ENCODE measurements at regions of chr16 and their contacts with region 1.

Region 1: GRCh38 chr16:72847187-72848027 is 200.5 kb downstream of the ZFHX3 start:
- DNase-seq: peak in 1 of 2 donors; percentile 80
- H3K4me3 ChIP-seq: no peak overlapping the region
- CTCF ChIP-seq: no peak
- POLR2A ChIP-seq: no peak

Region 2: DNA sequence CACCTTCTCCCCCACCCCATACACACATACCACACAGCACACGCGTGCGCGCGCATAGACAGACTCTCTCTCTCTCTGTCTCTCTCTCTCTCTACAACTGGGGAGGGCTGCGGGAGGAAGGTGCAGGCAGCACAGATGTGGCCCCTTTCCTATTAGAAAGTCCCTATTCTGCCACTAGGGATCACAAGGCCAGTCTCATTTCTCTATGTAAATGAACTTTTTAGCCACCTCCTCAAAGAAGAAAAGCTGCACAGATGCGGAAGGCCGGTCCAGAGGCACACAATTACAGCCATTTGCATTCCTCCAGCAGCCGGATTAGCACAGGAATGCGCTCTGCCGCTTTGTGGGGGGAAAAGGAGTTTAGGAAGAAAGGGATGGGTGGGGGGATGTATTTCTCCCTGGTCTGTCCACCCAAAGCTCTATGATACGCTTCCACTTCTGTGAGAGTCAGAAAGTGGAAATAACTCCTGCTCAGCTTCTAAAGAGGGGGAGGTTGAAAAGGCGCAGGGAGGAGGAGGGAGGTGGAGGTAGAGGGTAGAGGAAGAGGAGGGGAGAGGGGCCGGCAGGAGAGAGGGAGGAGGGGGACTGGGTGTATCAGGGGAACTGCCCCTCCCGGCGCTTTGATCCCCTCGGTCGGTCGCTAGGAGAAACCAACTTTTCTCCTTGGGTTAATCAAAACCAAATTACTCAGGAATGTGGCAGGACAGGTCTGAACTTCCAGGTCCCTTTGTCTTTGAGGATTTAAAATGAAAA is 188.8 kb after region 1 on chr16:
- intact Hi-C with region 1: loop called (anchors 10 kb)
- DNase-seq: no peak
- H3K4me3 ChIP-seq: no peak overlapping the region
- CTCF ChIP-seq: no peak
- POLR2A ChIP-seq: no peak